ENCODE measurements at regions of chr17 and their contacts with region 1.

Region 1: DNA sequence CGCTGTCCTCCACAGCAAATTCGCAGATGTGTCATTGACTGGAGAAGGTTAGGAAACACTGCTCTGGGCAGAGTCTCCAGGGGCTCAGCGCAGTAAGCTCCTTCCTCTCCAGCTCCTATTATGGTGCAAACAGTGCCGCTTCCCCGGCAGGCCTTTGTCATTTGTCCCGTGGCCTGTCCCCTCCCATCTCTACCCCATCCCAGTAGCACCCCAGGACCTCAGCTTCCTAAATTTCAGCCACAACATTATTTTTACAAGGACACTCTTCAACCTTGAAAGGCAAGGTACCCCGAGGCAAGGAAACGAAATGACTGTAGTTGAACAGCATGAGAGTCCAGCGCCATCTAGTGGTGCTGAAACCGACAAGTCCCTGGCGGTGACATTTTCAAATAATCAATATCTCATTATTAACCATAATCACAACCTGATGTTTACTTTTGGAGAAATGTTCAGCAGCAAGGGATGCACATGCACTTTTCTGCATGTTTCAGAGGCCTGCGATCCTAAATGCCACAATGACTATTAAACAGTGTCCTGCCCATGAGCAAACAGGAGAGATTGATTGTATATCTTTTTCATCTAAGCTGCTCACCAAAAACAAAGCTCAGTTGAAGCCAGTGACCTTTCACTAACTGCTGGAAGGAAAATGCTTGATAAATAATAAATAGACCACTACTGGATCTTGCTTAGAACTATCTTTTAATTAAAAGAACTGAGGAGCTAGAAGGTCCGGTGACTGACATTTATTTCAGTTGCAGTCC is 16.5 kb downstream of the MRPS23 start:
- DNase-seq: peak; percentile 59 to 68
- ATAC-seq: peak; percentile 71 to 79; a peak in 5 of 6 replicates
- H3K4me3 ChIP-seq: no peak overlapping the region
- H3K27ac ChIP-seq: peak overlapping the region in 1 of 2 experiments; percentile 46; a peak in 3 of 6 replicates
- H3K4me1 ChIP-seq: peaks cover 14% of the 10 kb centered on the region; the same call in 1 of the 3 replicates
- CTCF ChIP-seq: peak; percentile 99
- EP300 ChIP-seq: no peak
- POLR2A ChIP-seq: no peak
- RAD21 ChIP-seq: peak; percentile 86 to 88

Region 2: GRCh38 chr17:57121338-57122042 is 711.9 kb before region 1 on chr17:
- CTCF ChIA-PET with region 1: interaction called, 89 read pairs
- POLR2A ChIA-PET with region 1: no interaction called
- DNase-seq: peak; percentile 56 to 77
- ATAC-seq: peak; percentile 82 to 89
- H3K4me3 ChIP-seq: no peak overlapping the region
- H3K27ac ChIP-seq: no peak overlapping the region
- H3K4me1 ChIP-seq: 0 out of 3 replicates have a peak, but pooled peaks cover 4% of the 10 kb centered on the region
- CTCF ChIP-seq: peak; percentile 63
- EP300 ChIP-seq: no peak
- POLR2A ChIP-seq: no peak
- RAD21 ChIP-seq: peak; percentile 54 to 57

Region 3: DNA sequence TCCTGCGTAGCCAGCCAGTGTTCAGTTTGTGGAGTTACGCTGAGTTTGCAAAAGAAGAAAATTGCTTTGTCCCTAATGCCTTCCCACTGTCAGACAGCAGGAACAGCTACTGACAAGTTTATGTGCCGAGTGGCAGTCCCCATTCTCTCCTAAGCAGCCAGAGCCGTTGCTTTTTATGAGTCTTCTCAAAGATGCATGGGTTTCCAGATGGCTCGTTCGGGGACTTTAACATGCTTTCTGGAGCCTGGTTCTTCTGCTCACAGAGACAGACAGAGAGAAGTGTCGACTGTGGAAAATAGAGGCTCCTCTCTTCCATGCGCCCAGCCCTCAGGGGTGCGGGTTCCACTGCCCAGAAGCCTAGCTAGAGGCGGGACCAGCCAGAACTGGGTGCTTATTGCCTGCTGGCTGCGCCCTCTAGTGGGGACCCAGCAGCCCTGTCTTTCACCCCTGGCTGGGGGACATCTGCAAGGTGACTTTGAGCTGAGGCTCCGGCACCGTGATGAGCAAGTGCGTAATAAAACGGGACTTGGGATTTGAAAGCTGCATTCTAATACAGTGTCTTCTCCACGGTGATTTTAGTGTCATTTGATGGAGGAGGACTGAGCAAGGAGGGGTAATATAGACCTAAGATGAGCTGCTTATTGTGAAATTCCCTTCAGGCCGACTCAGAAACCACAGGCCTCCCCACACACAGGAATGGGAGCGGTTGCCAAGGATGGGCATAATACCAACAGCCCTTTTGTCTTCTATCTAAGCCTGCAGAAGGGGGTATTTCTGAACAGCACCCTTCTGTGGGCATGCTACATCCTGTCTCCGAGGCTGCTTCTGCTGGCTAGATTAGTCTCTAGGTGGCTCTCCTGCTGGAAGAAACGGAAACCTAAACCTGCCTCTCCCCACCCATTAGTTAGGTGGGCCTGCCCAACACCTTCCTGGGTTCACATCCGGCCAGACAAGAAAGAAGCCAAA is 161.4 kb before region 1 on chr17:
- CTCF ChIA-PET with region 1: interaction called, 12 read pairs
- POLR2A ChIA-PET with region 1: no interaction called
- DNase-seq: peak; percentile 81 to 95
- ATAC-seq: peak; percentile 93 to 99
- H3K4me3 ChIP-seq: no peak overlapping the region
- H3K27ac ChIP-seq: peak overlapping the region; percentile 36 to 48; a peak in 4 of 6 replicates
- H3K4me1 ChIP-seq: peaks cover 14% of the 10 kb centered on the region
- CTCF ChIP-seq: peak; percentile 98
- EP300 ChIP-seq: no peak
- POLR2A ChIP-seq: no peak
- RAD21 ChIP-seq: peak; percentile 93 to 96

Region 4: DNA sequence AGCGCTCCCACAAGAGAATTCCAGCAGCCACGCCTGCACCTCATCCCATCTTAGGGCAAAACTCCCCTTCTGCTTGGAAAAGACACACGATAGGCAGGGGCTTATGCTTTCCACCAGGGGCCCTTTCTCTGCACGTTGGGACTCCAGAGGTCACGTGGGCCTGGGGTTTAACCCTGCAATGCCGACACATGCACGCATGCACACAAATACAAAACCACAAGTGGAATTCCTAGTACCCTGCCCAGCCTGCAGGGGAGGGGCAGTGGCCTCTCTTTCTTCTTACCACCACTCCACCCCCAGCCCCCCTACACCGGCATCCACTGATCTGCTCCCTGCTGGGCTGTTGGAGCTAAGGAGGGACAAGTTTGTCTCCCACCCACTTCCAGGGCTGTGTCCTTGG is 71.5 kb before region 1 on chr17:
- CTCF ChIA-PET with region 1: interaction called, 11 read pairs
- POLR2A ChIA-PET with region 1: no interaction called
- DNase-seq: no peak
- ATAC-seq: no peak; a peak in 2 of 6 replicates
- H3K4me3 ChIP-seq: no peak overlapping the region
- H3K27ac ChIP-seq: 0 out of 6 replicates have a peak overlapping the region, but pooled peaks of 1 of the 2 experiments have one; percentile 6
- H3K4me1 ChIP-seq: peaks cover 15% of the 10 kb centered on the region
- CTCF ChIP-seq: no peak
- EP300 ChIP-seq: no peak
- POLR2A ChIP-seq: no peak
- RAD21 ChIP-seq: no peak

Region 5: DNA sequence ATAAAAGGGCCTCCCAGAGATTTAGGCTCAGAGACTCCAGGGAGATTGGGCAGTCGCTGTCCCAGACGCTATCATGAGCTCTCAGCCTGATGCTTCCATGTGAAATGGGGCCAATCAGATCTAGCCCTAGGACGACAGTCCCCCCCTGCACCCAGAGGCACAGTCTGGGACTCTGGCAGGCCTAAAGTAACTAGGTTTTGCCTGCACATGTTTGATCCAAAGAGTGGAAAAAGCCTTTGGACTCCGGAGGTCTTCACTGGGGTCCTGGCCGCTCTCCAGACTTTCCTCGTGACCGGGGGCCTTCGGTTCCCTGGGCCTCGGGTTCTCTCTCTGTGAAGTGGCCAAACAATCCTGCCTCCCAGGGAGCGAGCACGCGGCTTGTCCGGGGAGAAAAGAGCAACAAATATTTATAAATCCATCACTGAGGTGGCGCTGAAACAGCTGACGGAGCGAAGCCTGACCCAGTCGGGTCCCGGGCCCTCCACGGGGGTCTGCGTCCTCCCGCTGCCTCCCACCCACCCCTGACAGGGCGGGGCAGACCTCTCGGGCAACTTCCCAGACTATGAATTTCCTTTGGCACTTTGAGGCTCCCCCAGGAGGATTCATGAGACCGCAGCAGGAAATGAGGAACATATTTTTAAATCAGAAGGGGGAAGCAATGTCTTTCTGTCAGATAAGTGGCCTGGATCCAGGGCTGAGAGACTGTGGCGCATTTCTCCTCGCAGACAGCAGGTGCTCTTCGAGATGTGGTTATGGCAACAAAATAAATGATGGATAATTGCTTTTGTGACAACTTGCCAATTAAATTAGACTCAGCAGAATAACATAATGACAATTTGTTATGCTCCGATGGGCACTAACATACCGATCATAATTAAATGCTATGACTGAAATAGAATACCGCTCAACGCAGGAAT is 22.4 kb before region 1 on chr17:
- CTCF ChIA-PET with region 1: interaction called, 50 read pairs
- POLR2A ChIA-PET with region 1: no interaction called
- DNase-seq: no peak
- ATAC-seq: peak; percentile 43 to 63; a peak in 4 of 6 replicates
- H3K4me3 ChIP-seq: no peak overlapping the region
- H3K27ac ChIP-seq: no peak overlapping the region
- H3K4me1 ChIP-seq: no peaks in the 10 kb centered on the region
- CTCF ChIP-seq: no peak
- EP300 ChIP-seq: no peak
- POLR2A ChIP-seq: no peak
- RAD21 ChIP-seq: no peak

Region 6: DNA sequence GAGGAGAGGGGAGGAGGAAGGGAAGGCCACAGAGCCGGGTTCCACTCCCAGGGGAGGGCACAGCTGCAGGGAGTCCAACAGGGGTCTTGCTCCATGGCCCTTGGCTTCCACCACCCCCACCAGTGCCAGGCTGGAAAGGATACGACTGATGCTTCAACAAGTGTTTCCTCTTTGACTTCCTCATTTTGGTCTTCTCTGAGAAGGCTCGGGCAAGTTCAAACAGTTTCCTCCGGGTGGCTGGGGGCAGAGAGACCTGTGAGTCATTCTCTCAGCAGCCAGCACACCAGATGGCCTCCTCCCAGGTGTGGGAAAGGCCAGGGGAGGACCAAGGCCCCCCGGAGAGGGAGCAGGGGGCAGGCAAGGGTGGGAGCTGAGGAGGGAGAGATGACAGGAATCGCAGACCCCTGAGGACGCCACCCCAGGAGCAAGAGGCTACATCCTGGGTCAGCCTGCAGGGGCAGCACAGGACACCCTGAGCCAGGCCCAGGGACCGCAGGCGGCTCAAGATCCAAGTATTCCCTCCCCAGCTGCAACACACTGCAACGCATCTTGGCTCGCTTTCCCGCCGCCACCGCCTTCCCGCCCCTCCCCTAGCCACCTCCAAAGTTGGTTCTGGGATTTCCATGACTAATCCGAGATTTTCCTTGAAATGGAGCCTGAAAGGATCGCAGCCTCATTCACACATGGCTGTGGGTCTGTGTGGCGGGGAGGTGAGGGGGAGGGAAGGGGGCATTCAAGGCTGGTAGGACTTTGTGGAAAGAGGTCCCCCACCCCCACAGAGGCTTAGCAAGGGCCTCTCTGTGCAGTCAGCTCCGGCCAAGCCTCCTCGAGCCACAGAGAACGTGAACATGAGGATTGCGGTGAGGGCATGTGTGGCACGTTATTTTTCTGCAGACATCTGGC is 34.9 kb after region 1 on chr17:
- CTCF ChIA-PET with region 1: interaction called, 13 read pairs
- POLR2A ChIA-PET with region 1: no interaction called
- DNase-seq: peak; percentile 92 to 97
- ATAC-seq: peak; percentile 84 to 91
- H3K4me3 ChIP-seq: no peak overlapping the region
- H3K27ac ChIP-seq: peak overlapping the region; percentile 92 to 95
- H3K4me1 ChIP-seq: peaks cover 69% of the 10 kb centered on the region
- CTCF ChIP-seq: peak; percentile 50
- EP300 ChIP-seq: peak; percentile 44 to 91; a peak in 4 of 5 replicates
- POLR2A ChIP-seq: no peak
- RAD21 ChIP-seq: peak in 1 of 2 experiments; percentile 75

Region 7: GRCh38 chr17:58072862-58073261 is 239.5 kb after region 1 on chr17:
- CTCF ChIA-PET with region 1: no interaction called
- POLR2A ChIA-PET with region 1: no interaction called
- DNase-seq: no peak
- ATAC-seq: no peak
- H3K4me3 ChIP-seq: no peak overlapping the region
- H3K27ac ChIP-seq: no peak overlapping the region
- H3K4me1 ChIP-seq: no peaks in the 10 kb centered on the region
- CTCF ChIP-seq: no peak
- EP300 ChIP-seq: no peak
- POLR2A ChIP-seq: no peak
- RAD21 ChIP-seq: no peak

Region 8: GRCh38 chr17:58112970-58113631 is 279.7 kb after region 1 on chr17:
- CTCF ChIA-PET with region 1: interaction called, 29 read pairs
- POLR2A ChIA-PET with region 1: no interaction called
- DNase-seq: peak; percentile 78 to 79
- ATAC-seq: peak; percentile 80 to 87
- H3K4me3 ChIP-seq: no peak overlapping the region
- H3K27ac ChIP-seq: no peak overlapping the region
- H3K4me1 ChIP-seq: no peaks in the 10 kb centered on the region
- CTCF ChIP-seq: peak; percentile 96
- EP300 ChIP-seq: no peak
- POLR2A ChIP-seq: no peak
- RAD21 ChIP-seq: peak; percentile 98 to 99